Activated CD4-positive, alpha-beta T cell treated with anti-CD3 and anti-CD28 coated beads for 36 hours (primary cell): ENCODE measurements at regions of chr2 and their contacts with region 1.

Region 1: DNA sequence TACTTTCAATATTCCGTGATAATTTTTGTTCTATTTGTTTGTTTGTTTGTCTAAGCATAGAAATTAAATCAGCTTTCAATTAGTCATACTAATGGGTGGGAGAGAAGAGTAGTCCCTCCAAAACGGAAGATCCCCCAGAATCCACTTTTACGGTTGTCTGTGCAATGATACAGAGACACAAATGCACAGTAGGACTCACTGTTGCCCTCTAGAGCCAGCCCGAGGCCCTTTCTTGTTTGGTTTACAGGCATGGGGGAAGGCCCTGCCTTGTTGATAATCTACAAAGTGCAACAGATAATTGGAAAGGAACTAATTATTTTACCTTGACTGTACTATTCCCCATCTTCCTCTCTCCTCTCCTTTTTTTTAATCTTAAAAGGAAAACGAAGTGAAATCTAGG is 121.1 kb downstream of the ACOXL start:
- DNase-seq: peak; percentile 79
- ATAC-seq: peak; percentile 53
- H3K4me3 Mint-ChIP-seq: no peak overlapping the region
- H3K27ac Mint-ChIP-seq: no peak overlapping the region
- H3K4me1 Mint-ChIP-seq: peaks cover 45% of the 10 kb centered on the region
- H3K27me3 Mint-ChIP-seq: peaks cover 61% of the 10 kb centered on the region

Region 2: GRCh38 chr2:110812726-110813645 is 40.5 kb before region 1 on chr2:
- CTCF ChIA-PET with region 1: interaction called, 7 read pairs
- POLR2A ChIA-PET with region 1: interaction called, 4 read pairs
- intact Hi-C with region 1: loop called (anchors 2 kb)
- DNase-seq: no peak
- ATAC-seq: no peak
- H3K4me3 Mint-ChIP-seq: no peak overlapping the region
- H3K27ac Mint-ChIP-seq: no peak overlapping the region
- H3K4me1 Mint-ChIP-seq: peaks cover 5% of the 10 kb centered on the region
- H3K27me3 Mint-ChIP-seq: peaks cover 42% of the 10 kb centered on the region

Region 3: DNA sequence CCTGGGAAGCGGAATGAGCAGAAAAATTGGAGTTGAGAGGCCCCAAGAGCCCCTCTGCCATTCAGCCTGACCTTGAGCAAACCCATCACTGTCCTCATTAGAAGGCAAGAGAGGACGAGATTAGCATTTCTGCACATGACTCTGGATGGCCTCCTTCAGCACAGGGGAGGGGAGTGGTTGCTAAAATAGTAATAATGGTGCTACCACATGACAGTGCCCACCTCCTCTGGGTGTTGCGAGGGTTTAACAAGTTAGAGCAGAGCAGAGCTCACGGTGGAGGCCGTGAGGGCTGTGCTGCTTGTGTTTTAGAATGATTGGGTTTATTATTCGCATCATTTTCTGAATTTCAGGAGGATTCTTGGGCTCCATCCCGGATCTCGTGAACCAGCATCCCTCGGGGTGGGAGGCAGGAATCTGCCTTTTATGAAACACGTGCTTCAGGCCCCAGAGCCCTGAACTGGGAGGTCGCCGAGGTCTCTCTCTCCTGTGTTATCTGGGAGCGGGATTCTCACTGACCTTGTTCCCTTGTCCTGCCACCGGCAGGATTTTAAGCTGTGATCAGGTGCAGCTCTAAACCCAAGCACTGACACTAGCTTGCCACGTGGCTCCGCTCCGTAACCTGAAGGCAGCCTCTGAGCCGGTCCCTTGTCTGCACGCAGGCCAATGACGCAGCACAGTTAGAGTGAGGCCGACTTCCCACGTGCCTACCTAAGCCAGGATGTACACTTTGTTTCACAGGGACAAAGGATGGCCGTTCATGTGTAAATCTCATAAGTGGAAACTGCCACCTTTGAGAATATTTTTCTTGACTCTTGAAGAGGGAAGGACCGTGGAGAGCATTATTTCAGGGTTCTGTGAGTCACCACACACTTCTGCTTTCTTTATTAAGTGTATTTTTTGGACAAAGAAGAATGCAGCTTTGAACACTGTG is 21.2 kb after region 1 on chr2:
- CTCF ChIA-PET with region 1: interaction called, 3 read pairs
- POLR2A ChIA-PET with region 1: no interaction called
- intact Hi-C with region 1: loop called (anchors 2 kb)
- DNase-seq: no peak
- ATAC-seq: no peak
- H3K4me3 Mint-ChIP-seq: no peak overlapping the region
- H3K27ac Mint-ChIP-seq: no peak overlapping the region
- H3K4me1 Mint-ChIP-seq: peaks cover 11% of the 10 kb centered on the region
- H3K27me3 Mint-ChIP-seq: peaks cover 26% of the 10 kb centered on the region

Region 4: GRCh38 chr2:111091811-111092211 is 238.3 kb after region 1 on chr2:
- CTCF ChIA-PET with region 1: interaction called, 3 read pairs
- POLR2A ChIA-PET with region 1: no interaction called
- intact Hi-C with region 1: loop called in 1 of 2 experiments (anchors 2 kb)
- DNase-seq: peak; percentile 42
- ATAC-seq: peak; percentile 98
- H3K4me3 Mint-ChIP-seq: no peak overlapping the region
- H3K27ac Mint-ChIP-seq: no peak overlapping the region
- H3K4me1 Mint-ChIP-seq: peaks cover 16% of the 10 kb centered on the region
- H3K27me3 Mint-ChIP-seq: peaks cover 50% of the 10 kb centered on the region

Region 5: DNA sequence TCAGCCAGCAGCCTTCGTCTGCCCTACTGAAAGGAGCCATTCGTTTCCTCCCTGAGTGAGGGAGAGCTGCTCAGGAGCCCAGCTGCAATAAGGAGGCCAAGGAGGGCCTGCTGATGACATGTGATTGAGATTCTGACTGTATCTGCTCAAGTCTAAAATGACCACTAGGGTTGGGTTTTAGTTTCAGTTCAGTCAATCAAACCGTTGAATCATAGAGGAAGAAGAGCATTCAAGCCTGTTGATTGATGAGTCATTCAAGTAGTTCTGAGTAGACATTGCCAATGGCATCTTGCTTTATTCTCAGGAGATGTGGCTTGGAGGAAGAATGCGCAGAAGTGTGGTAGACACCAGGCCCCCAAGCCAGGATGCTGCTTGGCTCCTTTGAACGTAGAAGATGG is 247.3 kb after region 1 on chr2:
- CTCF ChIA-PET with region 1: no interaction called
- POLR2A ChIA-PET with region 1: no interaction called
- intact Hi-C with region 1: loop called in 1 of 2 experiments (anchors 5 kb)
- DNase-seq: peak; percentile 44
- ATAC-seq: peak; percentile 92
- H3K4me3 Mint-ChIP-seq: no peak overlapping the region
- H3K27ac Mint-ChIP-seq: no peak overlapping the region
- H3K4me1 Mint-ChIP-seq: peaks cover 22% of the 10 kb centered on the region
- H3K27me3 Mint-ChIP-seq: peaks cover 51% of the 10 kb centered on the region

Region 6: GRCh38 chr2:111705711-111706336 is 852.3 kb after region 1 on chr2:
- CTCF ChIA-PET with region 1: no interaction called
- POLR2A ChIA-PET with region 1: no interaction called
- intact Hi-C with region 1: loop called in 1 of 2 experiments (anchors 10 kb)
- DNase-seq: peak; percentile 78
- ATAC-seq: peak; percentile 90
- H3K4me3 Mint-ChIP-seq: no peak overlapping the region
- H3K27ac Mint-ChIP-seq: peak overlapping the region; percentile 58
- H3K4me1 Mint-ChIP-seq: peaks cover 39% of the 10 kb centered on the region
- H3K27me3 Mint-ChIP-seq: peaks cover 26% of the 10 kb centered on the region